ENCODE measurements at regions of chr10 and their contacts with region 1.

Region 1: GRCh38 chr10:71708301-71708703 is 11.3 kb downstream of the C10orf105 start:
- DNase-seq: peak; percentile 54
- H3K4me3 ChIP-seq: no peak overlapping the region
- H3K27ac ChIP-seq: no peak overlapping the region
- H3K4me1 ChIP-seq: no peaks in the 10 kb centered on the region
- H3K27me3 ChIP-seq: peaks cover 0 to 3% of the 10 kb centered on the region in 2 experiments
- CTCF ChIP-seq: peak; percentile 84 to 94
- POLR2A ChIP-seq: no peak

Region 2: DNA sequence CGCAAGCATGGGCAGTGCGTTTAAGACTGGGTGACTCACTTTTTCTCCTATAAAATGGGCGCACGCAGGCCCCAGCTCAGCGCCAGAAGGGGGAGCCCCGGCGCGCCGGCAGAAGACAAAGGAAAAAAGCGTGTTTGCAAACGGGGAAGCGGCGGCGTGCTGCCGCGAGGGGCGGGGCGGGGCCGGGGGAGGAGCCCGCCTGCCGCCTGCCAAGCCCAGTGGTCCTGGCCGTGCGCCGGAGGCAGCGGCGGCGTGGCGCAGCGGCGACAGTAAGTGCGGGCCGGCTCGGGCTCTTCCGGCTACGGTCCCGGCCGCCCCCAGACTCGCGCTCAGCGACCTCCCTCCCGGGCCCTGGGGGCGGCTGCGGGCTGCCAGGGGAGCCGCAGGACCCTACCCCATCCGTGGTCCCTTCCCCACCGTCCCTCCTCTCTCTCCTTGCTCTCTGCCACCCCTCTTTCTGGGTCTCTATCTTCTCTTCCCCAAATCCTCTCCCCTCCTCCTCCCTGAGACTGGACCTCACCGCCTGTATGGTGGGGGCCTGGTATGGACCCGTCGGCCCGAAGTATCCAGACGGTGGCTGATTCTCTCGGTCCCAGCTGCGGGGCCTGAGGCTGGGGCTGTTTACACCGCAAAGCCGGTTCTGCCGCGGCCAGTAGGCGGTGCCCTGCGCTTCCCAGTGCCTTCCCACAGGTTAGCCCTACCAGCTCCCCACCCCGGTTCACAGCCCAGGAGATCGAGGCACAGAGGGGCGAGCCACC is 389.1 kb before region 1 on chr10 and contains the start of gene SLC29A3:
- CTCF ChIA-PET with region 1: interaction called, 57 read pairs
- POLR2A ChIA-PET with region 1: no interaction called
- dilution Hi-C with region 1: no loop called
- intact Hi-C with region 1: loop called (anchors 1 kb)
- DNase-seq: peak; percentile 83
- H3K4me3 ChIP-seq: peak within 1 kb of the TSS; percentile 63 to 69 (median 65)
- H3K27ac ChIP-seq: peak within 1 kb of the TSS; percentile 60
- H3K4me1 ChIP-seq: peaks cover 3% of the 10 kb centered on the region
- H3K27me3 ChIP-seq: peaks cover 0 to 1% of the 10 kb centered on the region in 2 experiments
- CTCF ChIP-seq: peak; percentile 79 to 89
- POLR2A ChIP-seq: peak; percentile 68
- total RNA-seq, gene SLC29A3: 3.5 and 5.0 TPM in 2 replicates

Region 3: DNA sequence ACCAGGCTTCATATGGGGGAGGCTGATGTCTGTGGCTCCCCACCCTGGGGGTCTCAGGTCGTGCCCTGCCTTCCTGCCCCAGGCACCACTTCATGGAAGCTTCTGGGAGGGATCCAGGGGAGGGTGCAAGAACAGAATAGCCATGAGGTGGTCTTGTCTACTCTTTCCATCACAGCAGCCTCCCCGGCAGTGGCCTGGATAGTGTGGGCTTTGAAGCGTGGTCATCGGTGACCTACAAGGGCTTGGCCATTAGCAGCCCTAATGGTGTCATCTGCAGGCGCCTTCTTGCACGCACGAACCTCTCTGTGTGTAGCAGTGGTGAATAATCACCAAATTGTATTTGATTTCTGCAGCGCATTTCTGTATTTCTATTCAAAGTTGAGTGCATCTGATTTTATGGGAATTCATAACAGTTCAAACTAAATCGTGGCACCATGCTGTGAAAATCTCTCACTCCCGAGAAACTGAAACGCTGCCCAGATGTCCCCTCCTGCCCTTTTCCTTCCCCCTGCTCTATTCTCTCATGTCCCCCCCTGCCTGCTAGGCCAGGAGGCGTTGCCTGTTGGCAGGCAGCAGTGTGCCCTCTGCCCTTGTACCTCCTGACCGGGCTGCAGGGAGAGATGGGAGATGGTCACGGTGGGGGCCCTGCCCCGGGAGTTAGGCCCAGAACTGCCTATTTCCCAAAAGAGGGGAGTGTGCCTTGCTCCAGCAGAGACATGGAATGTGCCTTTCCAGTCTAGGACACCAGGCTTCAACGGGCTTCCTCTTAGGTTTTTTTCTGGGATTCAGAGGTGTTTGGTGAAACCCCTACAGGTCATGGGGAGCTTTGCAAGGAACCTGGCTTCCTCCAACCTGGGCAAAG is 276.8 kb before region 1 on chr10:
- CTCF ChIA-PET with region 1: no interaction called
- POLR2A ChIA-PET with region 1: no interaction called
- dilution Hi-C with region 1: no loop called
- intact Hi-C with region 1: no loop called
- DNase-seq: no peak
- H3K4me3 ChIP-seq: no peak overlapping the region
- H3K27ac ChIP-seq: no peak overlapping the region
- H3K4me1 ChIP-seq: peaks cover 2% of the 10 kb centered on the region
- H3K27me3 ChIP-seq: peaks cover 2 to 4% of the 10 kb centered on the region in 2 experiments
- CTCF ChIP-seq: no peak
- POLR2A ChIP-seq: no peak

Region 4: GRCh38 chr10:71486484-71487114 is 221.7 kb before region 1 on chr10:
- CTCF ChIA-PET with region 1: interaction called, 20 read pairs
- POLR2A ChIA-PET with region 1: no interaction called
- dilution Hi-C with region 1: no loop called
- intact Hi-C with region 1: loop called (anchors 1 kb)
- DNase-seq: peak; percentile 15
- H3K4me3 ChIP-seq: no peak overlapping the region
- H3K27ac ChIP-seq: no peak overlapping the region
- H3K4me1 ChIP-seq: no peaks in the 10 kb centered on the region
- H3K27me3 ChIP-seq: no peaks in the 10 kb centered on the region
- CTCF ChIP-seq: peak; percentile 66 to 80
- POLR2A ChIP-seq: no peak

Region 5: GRCh38 chr10:71623098-71623985 is 85.0 kb before region 1 on chr10:
- CTCF ChIA-PET with region 1: interaction called, 10 read pairs
- POLR2A ChIA-PET with region 1: no interaction called
- dilution Hi-C with region 1: no loop called
- intact Hi-C with region 1: no loop called
- DNase-seq: peak; percentile 21
- H3K4me3 ChIP-seq: no peak overlapping the region
- H3K27ac ChIP-seq: no peak overlapping the region
- H3K4me1 ChIP-seq: peaks cover 6% of the 10 kb centered on the region
- H3K27me3 ChIP-seq: no peaks in the 10 kb centered on the region
- CTCF ChIP-seq: peak in 1 of 2 donors; percentile 3
- POLR2A ChIP-seq: no peak

Region 6: DNA sequence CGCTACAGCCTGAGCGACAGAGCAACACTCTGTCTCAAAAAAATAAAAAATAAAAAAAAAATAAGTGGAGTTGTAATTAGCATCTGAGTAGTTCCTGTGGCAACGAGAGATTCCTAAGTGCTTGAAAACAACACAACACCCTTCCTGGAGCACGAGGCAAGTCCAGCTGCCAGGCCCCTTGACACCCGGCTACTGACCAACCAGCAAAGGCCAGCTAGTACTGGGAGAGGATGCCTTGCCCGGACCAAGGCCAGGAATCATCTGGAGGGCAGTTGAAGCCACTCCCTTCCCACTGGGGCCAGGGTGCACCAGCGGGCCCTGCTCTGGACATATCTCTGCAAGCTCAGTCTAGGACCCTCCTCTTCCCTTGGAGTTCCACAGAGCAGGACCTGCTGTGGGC is 10.7 kb after region 1 on chr10:
- CTCF ChIA-PET with region 1: interaction called, 19 read pairs
- POLR2A ChIA-PET with region 1: no interaction called
- dilution Hi-C with region 1: no loop called
- intact Hi-C with region 1: no loop called
- DNase-seq: no peak
- H3K4me3 ChIP-seq: no peak overlapping the region
- H3K27ac ChIP-seq: no peak overlapping the region
- H3K4me1 ChIP-seq: no peaks in the 10 kb centered on the region
- H3K27me3 ChIP-seq: peaks cover 0 to 2% of the 10 kb centered on the region in 2 experiments
- CTCF ChIP-seq: no peak
- POLR2A ChIP-seq: no peak

Region 7: DNA sequence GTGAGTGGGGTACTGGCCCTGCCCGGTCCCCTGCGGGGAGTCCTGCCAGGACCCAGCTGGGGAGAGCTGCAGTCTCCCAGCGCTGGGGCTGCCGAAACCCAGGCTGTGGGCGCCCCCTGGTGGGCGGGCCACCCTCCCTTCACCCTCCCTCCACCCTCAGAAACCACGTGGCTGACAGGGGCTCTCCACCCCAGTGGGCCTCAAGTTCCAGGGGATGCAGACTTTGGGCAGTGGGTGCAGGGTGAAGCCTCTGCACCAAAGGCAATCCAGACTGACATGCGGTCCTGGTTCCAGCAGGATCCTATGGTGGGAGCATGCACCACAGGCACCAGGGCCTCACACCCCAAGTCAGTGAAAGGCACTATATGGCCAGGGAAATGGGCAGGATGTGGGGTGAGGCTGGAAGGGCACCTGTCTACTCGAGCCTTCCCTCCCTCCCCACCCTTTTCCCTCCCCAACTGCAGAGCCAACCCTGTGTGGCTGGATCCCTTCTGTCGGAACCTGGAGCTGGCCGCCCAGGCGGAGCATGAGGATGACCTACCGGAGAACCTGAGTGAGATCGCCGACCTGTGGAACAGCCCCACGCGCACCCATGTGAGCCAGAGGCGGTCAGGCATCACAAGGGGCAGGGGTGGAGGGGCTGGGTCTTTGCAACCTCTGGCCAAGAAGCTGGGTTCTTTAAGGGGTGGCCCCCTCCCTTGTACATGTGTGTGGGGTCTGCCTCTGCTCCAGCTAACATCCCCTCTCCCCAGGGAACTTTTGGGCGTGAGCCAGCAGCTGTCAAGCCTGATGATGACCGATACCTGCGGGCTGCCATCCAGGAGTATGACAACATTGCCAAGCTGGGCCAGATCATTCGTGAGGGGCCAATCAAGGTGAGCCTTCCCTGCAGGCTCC is 104.0 kb after region 1 on chr10:
- CTCF ChIA-PET with region 1: interaction called, 32 read pairs
- POLR2A ChIA-PET with region 1: no interaction called
- dilution Hi-C with region 1: no loop called
- intact Hi-C with region 1: loop called (anchors 5 kb)
- DNase-seq: peak; percentile 46
- H3K4me3 ChIP-seq: no peak overlapping the region
- H3K27ac ChIP-seq: no peak overlapping the region
- H3K4me1 ChIP-seq: no peaks in the 10 kb centered on the region
- H3K27me3 ChIP-seq: no peaks in the 10 kb centered on the region
- CTCF ChIP-seq: peak; percentile 89 to 92
- POLR2A ChIP-seq: no peak